ENCODE measurements at regions of chr10 and their contacts with region 1.

Region 1: DNA sequence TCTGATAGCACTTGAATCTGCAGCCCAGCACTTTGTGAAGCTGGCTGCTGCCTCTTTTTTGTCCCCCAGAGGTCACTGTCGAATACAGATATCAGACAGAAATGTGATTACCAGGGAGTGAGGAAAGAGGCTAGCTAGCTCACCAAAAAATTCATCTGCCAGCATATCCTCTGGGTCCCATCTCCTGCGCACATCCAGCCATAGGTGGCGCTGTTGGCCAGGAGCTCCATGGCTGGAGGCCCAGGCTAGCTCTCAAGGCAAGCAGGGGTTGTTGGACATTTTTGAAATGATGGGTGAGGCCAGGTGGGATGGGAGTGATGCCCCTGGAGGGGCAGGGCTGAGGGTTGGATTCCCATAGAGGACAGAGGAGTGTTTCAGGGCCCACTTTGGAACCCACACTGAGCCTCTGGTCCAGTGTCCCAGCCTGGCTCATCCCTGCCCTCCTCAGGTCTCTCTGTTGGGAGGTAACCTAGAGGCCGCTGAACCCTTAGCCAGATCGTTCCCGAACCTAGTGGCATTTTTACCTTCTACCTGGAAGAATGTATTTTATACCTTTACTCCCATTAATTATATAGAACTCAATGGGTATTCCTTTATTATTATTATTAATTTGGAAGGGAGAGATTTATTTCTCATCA is 14.8 kb downstream of the DPCD start:
- DNase-seq: no peak
- H3K4me3 ChIP-seq: no peak overlapping the region
- CTCF ChIP-seq: peak; percentile 95

Region 2: GRCh38 chr10:101587725-101588653 is 14.9 kb before region 1 on chr10 and contains the starts of genes DPCD and POLL:
- CTCF ChIA-PET with region 1: interaction called, 35 read pairs
- POLR2A ChIA-PET with region 1: no interaction called
- DNase-seq: peak; percentile 62
- H3K4me3 ChIP-seq: peak within 1 kb of the TSS; percentile 99
- CTCF ChIP-seq: no peak

Region 3: DNA sequence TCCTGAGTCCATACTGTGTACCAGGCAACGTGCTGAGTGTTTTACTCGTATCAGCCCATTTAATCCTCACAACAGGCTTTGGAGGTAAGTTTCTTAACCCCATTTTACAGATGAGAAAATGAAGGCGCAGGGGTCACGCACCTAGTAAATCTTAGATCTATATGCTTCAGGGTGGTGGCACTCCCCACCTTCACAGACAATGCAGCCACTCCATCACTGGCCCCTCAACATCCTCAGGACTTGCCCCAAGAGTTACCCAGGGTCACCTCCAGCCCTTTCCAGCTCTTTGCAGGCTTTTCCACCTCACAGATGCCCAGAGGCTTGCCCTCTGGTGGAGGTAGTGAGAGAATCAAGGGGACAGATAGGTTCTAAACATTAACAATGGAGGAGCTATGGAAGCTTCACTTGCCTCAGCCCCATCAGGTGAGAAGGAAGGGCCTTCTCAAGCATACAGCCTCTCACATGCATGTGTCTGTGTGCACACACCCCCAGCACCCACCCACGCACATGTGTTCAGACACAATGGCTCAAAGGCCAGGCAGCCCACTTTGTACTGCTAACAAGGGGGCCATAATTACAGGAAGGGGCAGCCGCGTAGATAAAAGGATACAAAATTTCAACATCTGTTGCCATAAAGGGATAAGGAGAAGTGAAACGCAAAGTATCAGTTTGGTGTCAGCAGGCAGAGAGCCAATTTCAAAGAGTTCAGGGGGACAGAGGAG is 14.4 kb after region 1 on chr10:
- CTCF ChIA-PET with region 1: interaction called, 16 read pairs
- POLR2A ChIA-PET with region 1: no interaction called
- DNase-seq: no peak
- H3K4me3 ChIP-seq: no peak overlapping the region
- CTCF ChIP-seq: no peak

Region 4: DNA sequence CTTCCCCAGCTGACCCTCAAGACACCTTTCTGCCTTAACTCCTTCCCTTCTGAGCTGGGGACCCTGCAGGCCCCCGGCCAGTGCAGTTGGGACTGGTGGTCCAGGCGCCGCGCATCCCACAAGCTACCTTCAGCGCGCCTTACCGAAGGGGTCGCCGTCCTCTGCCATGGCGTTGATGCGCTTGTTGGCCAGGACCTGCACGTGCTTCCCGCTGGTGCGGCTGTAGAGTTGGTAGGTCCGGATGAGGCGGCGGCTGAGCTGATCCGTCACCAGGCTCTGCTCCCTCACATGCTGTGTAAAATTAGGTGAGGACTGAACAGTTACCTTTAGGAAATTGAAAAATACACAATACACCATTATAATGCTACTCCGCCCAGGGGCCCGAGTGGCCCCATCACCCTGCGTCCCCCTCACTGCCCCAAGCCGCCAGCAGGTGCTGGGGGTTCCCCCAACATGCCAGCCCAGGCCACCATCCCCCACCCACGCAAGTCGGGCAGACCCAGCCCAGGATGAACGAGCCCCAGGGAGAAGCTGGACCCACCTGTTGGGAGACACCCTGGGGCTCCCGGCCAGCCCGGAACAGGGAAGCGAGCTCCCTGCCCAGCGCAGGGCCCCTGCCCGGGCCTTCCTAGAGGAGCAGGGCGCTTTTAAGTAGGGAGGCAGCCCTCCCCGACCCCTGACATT is 171.9 kb after region 1 on chr10:
- CTCF ChIA-PET with region 1: interaction called, 265 read pairs
- POLR2A ChIA-PET with region 1: no interaction called
- DNase-seq: no peak
- H3K4me3 ChIP-seq: no peak overlapping the region
- CTCF ChIP-seq: no peak

Measured in AG04449 (cell line).